ENCODE measurements at regions of chr5 and their contacts with region 1.

Region 1: DNA sequence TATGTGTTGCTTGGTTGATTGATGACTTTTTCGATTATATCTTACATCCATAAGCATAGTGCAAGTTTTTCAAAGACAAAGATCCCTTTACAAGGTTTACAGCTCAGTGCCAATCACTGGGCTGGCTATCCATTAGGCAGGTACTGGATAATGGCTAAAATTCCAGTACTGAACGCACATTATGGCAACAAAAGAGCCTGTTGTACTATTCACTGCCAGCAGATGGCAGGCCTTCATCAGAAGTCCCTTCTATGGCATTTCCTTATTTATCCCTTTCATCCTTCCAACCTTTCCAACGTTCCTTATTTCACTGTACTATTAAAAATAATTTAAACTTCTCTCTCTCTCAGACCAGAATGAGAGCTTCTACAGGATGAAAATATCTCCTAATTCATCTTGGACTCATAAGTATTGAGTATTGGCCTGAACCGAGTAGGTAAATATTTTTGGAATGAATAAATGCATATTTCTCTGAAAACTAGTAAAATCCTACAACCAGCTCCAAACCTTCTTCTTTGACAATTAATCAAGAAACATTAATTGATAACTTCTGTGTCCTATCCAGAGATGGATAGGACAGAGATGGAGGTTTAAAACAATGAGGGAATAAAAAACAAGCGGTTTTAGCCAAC is 6.7 kb upstream of the WNT8A start:
- DNase-seq: peak; percentile 67 to 75
- H3K4me3 ChIP-seq: no peak overlapping the region
- H3K4me3 Mint-ChIP-seq: no peak overlapping the region
- H3K27ac Mint-ChIP-seq: no peak overlapping the region
- H3K4me1 ChIP-seq: peaks cover 21% of the 10 kb centered on the region
- H3K4me1 Mint-ChIP-seq: peaks cover 16% of the 10 kb centered on the region
- H3K27me3 ChIP-seq: no peaks in the 10 kb centered on the region
- H3K27me3 Mint-ChIP-seq: no peaks in the 10 kb centered on the region
- CTCF ChIP-seq: peak; percentile 79 to 88

Region 2: GRCh38 chr5:138095100-138095907 is 18.1 kb after region 1 on chr5:
- CTCF ChIA-PET with region 1: interaction called, 6 read pairs
- POLR2A ChIA-PET with region 1: no interaction called
- intact Hi-C with region 1: loop called (anchors 1 kb)
- DNase-seq: peak; percentile 82 to 86
- H3K4me3 ChIP-seq: no peak overlapping the region
- H3K4me3 Mint-ChIP-seq: peak overlapping the region; percentile 57
- H3K27ac Mint-ChIP-seq: peak overlapping the region; percentile 27
- H3K4me1 ChIP-seq: peaks cover 59% of the 10 kb centered on the region
- H3K4me1 Mint-ChIP-seq: peaks cover 44% of the 10 kb centered on the region
- H3K27me3 ChIP-seq: no peaks in the 10 kb centered on the region
- H3K27me3 Mint-ChIP-seq: no peaks in the 10 kb centered on the region
- CTCF ChIP-seq: no peak

Region 3: DNA sequence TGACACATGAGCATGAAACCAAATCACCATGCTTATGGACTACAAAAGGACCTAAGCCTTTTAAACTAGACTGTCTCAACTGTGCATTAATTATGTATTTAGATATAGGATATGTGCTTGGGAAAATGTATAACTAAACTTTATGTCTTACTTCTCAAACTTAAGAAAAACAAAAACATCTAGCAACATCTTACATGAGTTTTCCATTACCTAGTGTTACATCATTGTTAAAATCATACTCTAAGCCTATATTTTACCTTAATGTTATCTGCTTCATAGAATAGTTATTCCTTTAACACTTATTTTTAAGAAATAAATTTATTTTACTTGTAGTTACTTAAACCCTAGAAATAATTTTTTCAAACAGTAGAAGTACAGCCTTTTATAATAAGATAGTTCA is 38.1 kb after region 1 on chr5:
- CTCF ChIA-PET with region 1: no interaction called
- POLR2A ChIA-PET with region 1: no interaction called
- intact Hi-C with region 1: no loop called
- DNase-seq: no peak
- H3K4me3 ChIP-seq: no peak overlapping the region
- H3K4me3 Mint-ChIP-seq: no peak overlapping the region
- H3K27ac Mint-ChIP-seq: no peak overlapping the region
- H3K4me1 ChIP-seq: no peaks in the 10 kb centered on the region
- H3K4me1 Mint-ChIP-seq: no peaks in the 10 kb centered on the region
- H3K27me3 ChIP-seq: no peaks in the 10 kb centered on the region
- H3K27me3 Mint-ChIP-seq: no peaks in the 10 kb centered on the region
- CTCF ChIP-seq: no peak

Measured in Caco-2 (cell line).